Right ventricle myocardium inferior (tissue), 1 donor: ENCODE measurements at regions of chr5 and their contacts with region 1.

Region 1: DNA sequence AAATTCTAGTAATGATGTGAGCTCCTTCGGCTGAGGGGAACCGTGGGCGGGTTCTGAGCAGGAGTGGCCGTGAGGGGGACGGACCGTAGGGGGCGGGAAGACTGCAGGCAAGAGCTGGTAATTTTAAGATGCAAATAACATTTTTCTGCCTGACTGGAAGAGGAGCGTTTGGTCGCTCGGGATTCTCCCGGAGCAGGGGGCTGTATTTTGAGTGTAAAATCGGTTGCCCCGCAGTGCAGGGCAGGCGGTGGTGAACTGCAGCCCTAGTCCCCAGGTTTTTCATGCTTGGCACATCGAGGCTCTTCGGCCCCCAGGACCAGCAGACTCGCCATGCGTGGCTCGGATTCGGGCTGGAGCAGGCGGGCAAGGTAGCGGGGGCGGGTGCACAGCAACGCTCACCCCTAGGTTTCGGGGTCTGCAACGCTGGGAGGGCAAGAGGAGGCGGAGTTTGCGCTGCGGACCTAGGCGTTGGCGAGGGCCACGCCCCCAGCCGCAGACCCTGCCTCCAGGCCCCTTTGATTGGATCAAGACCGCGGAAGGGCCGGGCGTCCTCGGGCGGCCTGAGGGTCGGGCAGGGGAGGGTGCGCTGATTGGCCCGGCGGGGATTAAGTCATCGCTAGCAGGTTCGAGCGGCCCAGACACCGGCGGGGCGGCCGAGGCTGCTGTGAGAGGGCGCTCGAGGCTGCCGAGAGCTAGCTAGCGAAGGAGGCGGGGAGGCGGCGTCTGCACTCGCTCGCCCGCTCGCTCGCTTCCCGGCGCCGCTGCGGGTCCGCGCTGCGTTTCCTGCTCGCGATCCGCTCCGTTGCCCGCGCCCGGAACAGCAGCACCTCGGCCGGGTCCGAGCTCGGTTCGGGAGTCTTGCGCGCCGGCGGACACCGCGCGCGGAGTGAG is at the start of gene ARHGAP26:
- DNase-seq: peak; percentile 99
- ATAC-seq: peak; percentile 98
- total RNA-seq, gene ARHGAP26: 29.8 TPM

Region 2: GRCh38 chr5:142713121-142713706 is 56.8 kb before region 1 on chr5:
- intact Hi-C with region 1: loop called (anchors 2 kb)
- DNase-seq: peak; percentile 93
- ATAC-seq: peak; percentile 84

Region 3: DNA sequence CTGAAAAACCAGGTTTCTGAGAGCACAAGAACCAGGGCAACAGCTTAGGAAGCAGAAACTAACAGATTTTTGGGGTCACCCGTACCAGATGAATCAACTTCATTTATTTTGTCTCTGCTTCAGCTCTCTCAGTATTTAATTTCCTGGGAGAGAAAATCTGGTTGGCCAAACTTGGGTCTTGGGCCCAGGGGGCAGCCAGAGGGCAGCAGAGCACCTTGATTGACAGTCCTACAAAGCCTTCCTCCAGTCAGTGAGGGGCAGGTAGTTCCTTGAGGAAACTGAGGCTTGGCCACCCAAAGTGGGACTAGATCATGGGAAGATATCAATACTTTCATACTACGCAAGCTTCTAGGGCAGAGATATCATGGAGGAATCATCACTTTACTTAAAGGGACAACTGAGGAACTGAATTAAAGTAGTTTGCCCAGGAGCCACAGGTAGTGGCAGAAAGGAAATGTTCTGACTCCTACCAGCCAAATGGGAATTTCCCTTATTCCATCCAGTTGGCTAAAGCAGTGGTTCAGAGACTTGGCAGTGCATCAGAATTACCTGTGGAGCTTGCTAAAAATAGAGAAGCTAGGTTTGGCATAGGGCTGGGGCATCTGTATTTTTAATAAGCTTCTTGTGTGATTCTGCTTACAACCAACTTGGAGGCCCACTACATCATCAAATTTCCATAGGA is 21.3 kb before region 1 on chr5:
- intact Hi-C with region 1: loop called (anchors 1 kb)
- DNase-seq: peak; percentile 68
- ATAC-seq: no peak

Region 4: DNA sequence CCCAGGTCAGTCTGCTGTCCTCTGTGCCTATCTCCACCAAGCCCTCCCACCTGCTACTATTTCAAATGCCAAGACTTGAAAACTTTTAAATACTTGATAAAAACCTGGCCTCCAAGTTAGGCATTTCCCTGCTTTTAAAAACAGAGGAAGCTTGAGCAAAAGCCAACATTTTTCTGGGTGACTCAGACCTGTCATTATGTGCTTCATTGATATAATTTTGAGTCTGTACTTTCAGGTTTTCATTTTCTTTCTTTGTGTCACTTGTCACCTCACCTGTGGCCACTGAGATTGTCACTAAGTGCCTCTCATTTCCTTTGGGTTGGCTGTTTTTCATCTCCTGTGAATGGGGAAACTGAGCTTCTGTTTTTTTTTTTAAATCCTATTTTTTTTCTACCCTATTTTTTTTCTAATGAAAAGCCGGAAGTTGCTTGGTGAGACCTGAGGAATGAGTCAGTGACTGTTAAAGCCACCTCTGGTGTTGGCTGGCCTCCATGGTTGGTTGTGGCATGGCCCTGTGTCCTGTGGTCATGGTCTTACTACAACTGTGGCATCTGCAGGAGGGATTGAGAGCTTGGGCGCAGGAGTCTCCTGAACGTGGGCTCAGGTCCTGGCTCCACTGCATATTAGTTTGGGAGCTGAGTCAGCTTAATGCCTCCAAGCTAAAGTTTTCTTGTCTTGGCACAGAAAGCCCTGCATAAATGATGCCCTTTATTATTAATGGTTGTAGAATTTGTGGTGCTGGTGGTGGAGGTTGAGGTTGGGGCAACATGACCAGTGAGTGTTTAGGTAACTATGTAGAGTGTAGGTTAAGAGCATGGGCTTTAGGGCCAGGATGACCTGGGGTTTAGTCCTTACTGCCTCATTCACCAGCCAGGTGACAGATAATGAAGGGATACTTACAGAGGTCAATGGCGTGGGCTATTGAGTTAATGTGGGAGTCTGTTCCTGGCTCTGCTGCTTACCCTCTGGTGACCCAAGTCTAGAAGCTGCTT is 57.1 kb after region 1 on chr5:
- intact Hi-C with region 1: loop called (anchors 5 kb)
- DNase-seq: no peak
- ATAC-seq: no peak

Region 5: DNA sequence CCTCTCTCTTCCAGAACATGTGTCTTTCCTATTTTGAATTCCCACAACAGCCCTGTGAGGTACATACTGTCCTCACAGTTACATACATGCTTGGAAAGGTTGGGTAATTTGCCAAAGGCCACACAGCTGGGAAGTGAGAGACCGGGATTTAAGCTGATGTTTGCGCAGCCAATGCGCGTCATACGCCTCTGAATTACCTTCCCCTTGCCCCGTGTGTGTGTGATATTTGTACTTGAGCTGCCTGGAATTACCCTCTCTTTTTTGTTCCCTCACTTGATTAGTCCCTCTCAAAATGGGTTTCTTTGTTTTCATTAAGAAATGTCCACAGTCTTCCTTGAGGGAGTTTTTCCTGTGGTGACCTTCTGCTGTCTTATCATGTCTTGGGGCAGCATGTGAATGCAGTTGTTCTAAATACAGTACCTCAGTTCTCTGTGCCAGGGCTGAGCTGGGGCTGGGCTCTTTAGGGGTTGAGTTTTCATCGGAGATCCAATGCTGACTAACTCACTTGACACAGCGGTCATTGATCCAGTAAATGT is 94.8 kb after region 1 on chr5:
- intact Hi-C with region 1: loop called (anchors 2 kb)
- DNase-seq: no peak
- ATAC-seq: peak; percentile 24